ENCODE measurements at regions of chr17 and their contacts with region 1.

Region 1: GRCh38 chr17:71983828-71984227 is 137.0 kb upstream of the SOX9 start:
- DNase-seq: no peak
- ATAC-seq: no peak
- H3K4me3 ChIP-seq: no peak overlapping the region
- H3K27ac ChIP-seq: no peak overlapping the region
- H3K4me1 ChIP-seq: no peaks in the 10 kb centered on the region
- H3K27me3 ChIP-seq: peaks cover 4% of the 10 kb centered on the region; the same call in 1 of the 2 replicates
- CTCF ChIP-seq: no peak

Region 2: GRCh38 chr17:71613996-71614395 is 369.8 kb before region 1 on chr17:
- CTCF ChIA-PET with region 1: no interaction called
- POLR2A ChIA-PET with region 1: no interaction called
- in situ Hi-C with region 1: no loop called
- intact Hi-C with region 1: no loop called
- DNase-seq: no peak
- ATAC-seq: no peak
- H3K4me3 ChIP-seq: no peak overlapping the region
- H3K27ac ChIP-seq: no peak overlapping the region
- H3K4me1 ChIP-seq: no peaks in the 10 kb centered on the region
- H3K27me3 ChIP-seq: no peaks in the 10 kb centered on the region
- CTCF ChIP-seq: no peak

Region 3: DNA sequence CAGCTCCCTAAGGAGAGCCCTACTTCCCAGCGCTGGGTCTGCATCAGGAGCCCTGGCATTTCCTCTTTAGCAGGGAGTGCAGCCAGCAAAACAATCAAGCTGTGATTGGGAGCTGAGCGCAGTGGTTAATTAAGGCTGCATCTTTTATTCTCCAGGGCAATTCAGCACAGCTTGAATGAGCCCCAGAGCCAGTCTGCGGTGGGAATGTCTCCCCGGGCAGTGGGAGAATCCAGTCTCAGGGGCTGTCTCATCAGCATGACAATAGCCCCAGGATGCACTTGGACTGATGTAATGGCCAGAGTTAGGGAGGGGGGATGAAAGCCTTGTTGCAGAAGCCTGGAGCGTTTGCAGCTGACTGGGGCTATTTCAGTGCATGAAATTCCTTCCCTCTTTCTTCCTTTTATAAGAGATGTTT is 155.6 kb before region 1 on chr17:
- CTCF ChIA-PET with region 1: no interaction called
- POLR2A ChIA-PET with region 1: no interaction called
- in situ Hi-C with region 1: no loop called
- intact Hi-C with region 1: no loop called
- DNase-seq: no peak
- ATAC-seq: no peak
- H3K4me3 ChIP-seq: no peak overlapping the region
- H3K27ac ChIP-seq: no peak overlapping the region
- H3K4me1 ChIP-seq: no peaks in the 10 kb centered on the region
- H3K27me3 ChIP-seq: peaks cover 19% of the 10 kb centered on the region
- CTCF ChIP-seq: no peak

Region 4: DNA sequence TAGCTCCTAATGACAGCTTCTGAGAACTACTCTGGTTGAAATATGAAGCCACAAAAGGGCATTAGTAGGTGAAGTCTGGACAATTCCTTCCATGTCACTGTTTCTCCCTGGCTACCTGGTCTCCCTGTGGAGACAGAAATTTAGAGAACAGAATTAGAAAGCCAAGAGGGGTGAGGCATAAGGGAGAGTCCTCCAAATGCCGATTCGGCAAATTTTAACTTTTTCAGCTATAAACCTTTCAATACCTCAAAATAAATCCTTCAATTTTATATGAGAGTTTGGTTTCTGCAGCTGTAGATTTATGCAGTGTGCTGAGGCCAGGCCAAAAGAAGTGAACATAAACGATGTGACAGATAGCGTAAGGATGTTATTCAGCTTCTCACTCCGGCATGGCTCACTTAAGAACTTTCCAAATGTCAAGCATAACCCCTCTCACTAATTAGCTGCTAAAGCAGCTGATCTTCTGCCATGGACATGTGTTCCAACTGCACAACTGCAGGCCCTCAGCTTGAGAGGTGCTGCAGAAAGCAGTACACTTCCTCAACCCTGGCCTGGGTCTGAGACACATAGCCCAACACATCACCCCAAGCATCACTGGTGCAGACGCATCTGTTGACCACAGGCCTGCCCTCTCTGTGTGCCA is 110.9 kb before region 1 on chr17:
- CTCF ChIA-PET with region 1: no interaction called
- POLR2A ChIA-PET with region 1: interaction called, 12 read pairs
- in situ Hi-C with region 1: no loop called
- intact Hi-C with region 1: no loop called
- DNase-seq: no peak
- ATAC-seq: no peak
- H3K4me3 ChIP-seq: no peak overlapping the region
- H3K27ac ChIP-seq: no peak overlapping the region
- H3K4me1 ChIP-seq: no peaks in the 10 kb centered on the region
- H3K27me3 ChIP-seq: no peaks in the 10 kb centered on the region; the same call in 1 of the 2 replicates
- CTCF ChIP-seq: no peak

Region 5: DNA sequence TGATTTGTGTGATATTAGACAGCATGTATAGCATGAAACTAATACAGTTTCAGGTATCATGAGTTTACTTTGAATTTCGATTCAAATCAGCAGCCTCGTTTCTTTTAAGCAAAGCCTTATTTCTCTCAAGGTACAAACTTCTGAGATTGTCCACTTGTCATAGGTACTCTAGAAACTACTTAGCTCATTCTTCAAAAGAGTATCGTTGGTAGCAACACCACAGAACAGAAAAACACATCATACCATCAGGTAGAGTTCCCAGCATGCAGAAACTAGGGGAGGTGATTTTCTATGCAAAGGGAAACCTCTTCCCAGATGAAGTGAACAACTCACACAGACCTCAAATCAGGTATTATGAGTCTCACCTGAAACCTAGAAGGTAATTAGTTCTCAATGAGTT is 100.0 kb before region 1 on chr17:
- CTCF ChIA-PET with region 1: no interaction called
- POLR2A ChIA-PET with region 1: no interaction called
- in situ Hi-C with region 1: no loop called
- intact Hi-C with region 1: no loop called
- DNase-seq: no peak
- ATAC-seq: no peak
- H3K4me3 ChIP-seq: no peak overlapping the region
- H3K27ac ChIP-seq: no peak overlapping the region
- H3K4me1 ChIP-seq: no peaks in the 10 kb centered on the region
- H3K27me3 ChIP-seq: peaks cover 4% of the 10 kb centered on the region
- CTCF ChIP-seq: no peak

Region 6: DNA sequence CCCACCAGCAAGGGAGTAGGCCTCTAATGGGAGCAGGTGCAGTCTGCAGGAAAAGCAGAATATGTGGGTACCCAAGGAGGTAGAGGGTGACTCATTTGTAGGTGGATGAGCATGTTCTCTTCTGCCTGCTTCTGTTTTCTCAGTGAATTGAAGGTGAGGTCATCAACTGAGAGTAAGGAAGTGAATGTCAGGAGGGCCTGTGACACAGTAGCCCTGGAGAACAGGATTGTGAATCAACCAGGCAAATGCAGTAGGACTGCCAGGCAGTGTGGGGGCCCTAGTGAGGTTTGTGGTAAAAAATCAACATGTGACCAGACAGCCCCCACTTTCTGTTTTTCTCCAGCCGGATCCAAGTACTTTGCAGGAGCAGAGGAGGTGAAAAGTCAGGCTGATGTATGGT is 13.5 kb before region 1 on chr17:
- CTCF ChIA-PET with region 1: no interaction called
- POLR2A ChIA-PET with region 1: no interaction called
- in situ Hi-C with region 1: no loop called
- intact Hi-C with region 1: no loop called
- DNase-seq: no peak
- ATAC-seq: no peak
- H3K4me3 ChIP-seq: no peak overlapping the region
- H3K27ac ChIP-seq: no peak overlapping the region
- H3K4me1 ChIP-seq: no peaks in the 10 kb centered on the region; the same call in 1 of the 2 replicates
- H3K27me3 ChIP-seq: no peaks in the 10 kb centered on the region
- CTCF ChIP-seq: no peak